ENCODE measurements at regions of chrX and their contacts with region 1.

Region 1: DNA sequence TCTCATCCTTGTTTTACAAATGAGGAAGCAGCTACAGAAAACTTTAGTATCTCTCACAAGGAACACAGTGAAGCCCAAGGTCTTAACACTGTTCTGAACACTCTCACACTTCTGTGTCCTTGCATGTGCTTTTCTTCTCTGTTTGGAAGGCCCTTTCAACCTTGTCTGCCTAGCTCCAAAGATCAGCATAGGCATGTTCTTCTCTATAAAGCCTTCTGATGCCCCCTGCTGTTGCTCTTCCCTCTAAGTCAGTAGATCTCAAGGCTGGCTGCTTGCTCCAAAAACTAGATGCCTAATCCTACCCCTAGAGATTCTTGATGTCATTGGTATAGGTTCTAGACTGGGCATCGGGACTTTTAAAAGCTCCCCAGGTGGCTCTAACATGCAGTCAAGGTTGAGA is 5.9 kb downstream of the APOO start:
- DNase-seq: peak; percentile 49
- H3K4me3 ChIP-seq: no peak overlapping the region
- H3K27ac ChIP-seq: no peak overlapping the region
- H3K27me3 ChIP-seq: no peaks in the 10 kb centered on the region
- CTCF ChIP-seq: peak; percentile 60

Region 2: GRCh38 chrX:23699636-23700194 is 202.1 kb before region 1 on chrX:
- CTCF ChIA-PET with region 1: interaction called, 102 read pairs
- POLR2A ChIA-PET with region 1: no interaction called
- DNase-seq: no peak
- H3K4me3 ChIP-seq: no peak overlapping the region
- H3K27ac ChIP-seq: no peak overlapping the region
- H3K27me3 ChIP-seq: no peaks in the 10 kb centered on the region
- CTCF ChIP-seq: no peak

Region 3: DNA sequence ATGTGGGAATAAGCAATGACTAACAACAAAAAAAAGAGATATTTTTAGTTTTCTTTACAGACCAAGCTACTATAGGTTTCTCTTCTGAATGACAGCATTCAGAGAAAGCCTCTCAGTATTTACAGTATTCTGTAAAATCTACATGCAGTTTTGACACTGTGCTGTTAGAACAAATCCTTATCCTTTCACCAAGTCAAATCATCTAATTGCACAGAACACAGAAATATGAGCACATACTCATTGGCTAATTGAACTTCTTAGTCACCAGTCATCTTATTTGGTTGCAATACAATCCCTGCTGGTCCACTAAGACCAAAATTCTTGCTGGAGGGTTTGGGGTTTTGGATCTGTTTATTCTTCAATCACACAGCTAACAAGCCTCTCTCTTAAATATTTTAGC is 164.4 kb before region 1 on chrX:
- CTCF ChIA-PET with region 1: interaction called, 33 read pairs
- POLR2A ChIA-PET with region 1: interaction called, 3 read pairs
- DNase-seq: no peak
- H3K4me3 ChIP-seq: no peak overlapping the region
- H3K27ac ChIP-seq: no peak overlapping the region
- H3K27me3 ChIP-seq: no peaks in the 10 kb centered on the region
- CTCF ChIP-seq: no peak

Region 4: GRCh38 chrX:23756157-23756559 is 145.6 kb before region 1 on chrX:
- CTCF ChIA-PET with region 1: interaction called, 36 read pairs
- POLR2A ChIA-PET with region 1: no interaction called
- DNase-seq: no peak
- H3K4me3 ChIP-seq: no peak overlapping the region
- H3K27ac ChIP-seq: no peak overlapping the region
- H3K27me3 ChIP-seq: no peaks in the 10 kb centered on the region
- CTCF ChIP-seq: peak; percentile 56

Region 5: GRCh38 chrX:23888887-23889501 is 12.8 kb before region 1 on chrX:
- CTCF ChIA-PET with region 1: interaction called, 17 read pairs
- POLR2A ChIA-PET with region 1: no interaction called
- DNase-seq: no peak
- H3K4me3 ChIP-seq: no peak overlapping the region
- H3K27ac ChIP-seq: no peak overlapping the region
- H3K27me3 ChIP-seq: no peaks in the 10 kb centered on the region
- CTCF ChIP-seq: no peak

Region 6: DNA sequence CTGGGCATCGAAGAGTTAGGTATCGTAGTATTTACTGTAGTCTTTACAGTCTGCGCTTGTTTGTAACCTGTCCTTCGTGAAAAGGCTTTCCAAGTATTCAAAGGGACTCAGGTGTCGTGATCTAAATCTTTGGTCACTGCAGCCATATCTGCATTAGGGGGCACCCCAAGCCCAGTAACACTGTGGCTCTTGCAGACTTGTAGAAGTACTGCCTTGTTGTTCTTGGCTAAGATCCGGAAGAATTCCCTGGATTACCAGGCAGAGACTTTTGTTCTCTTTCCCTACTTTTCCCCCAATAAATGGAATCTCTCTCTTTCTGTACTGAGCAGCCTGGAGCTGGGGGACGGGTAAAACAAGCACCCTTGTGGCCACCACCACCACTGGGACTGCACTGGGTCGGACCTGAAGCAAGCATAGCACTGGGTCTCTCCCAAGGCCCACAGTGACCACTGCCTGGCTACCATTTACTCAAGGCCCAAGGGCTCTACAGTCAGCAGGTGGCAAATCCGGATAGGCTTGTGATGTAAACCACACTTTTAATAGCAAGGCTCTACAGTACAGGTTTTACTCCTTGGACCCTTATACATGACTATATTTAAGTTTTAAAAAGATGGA is 18.0 kb after region 1 on chrX:
- CTCF ChIA-PET with region 1: no interaction called
- POLR2A ChIA-PET with region 1: no interaction called
- DNase-seq: no peak
- H3K4me3 ChIP-seq: no peak overlapping the region
- H3K27ac ChIP-seq: no peak overlapping the region
- H3K27me3 ChIP-seq: no peaks in the 10 kb centered on the region
- CTCF ChIP-seq: no peak

Measured in AG04450 (cell line).